A549 (cell line): ENCODE measurements at regions of chr9 and their contacts with region 1.

Region 1: GRCh38 chr9:137672907-137673791 is 54.3 kb downstream of the EHMT1 start:
- DNase-seq: peak; percentile 67 to 68
- ATAC-seq: peak; percentile 54 to 83; a peak in 4 of 6 replicates
- H3K4me3 ChIP-seq: no peak overlapping the region
- H3K27ac ChIP-seq: peak overlapping the region in 1 of 2 experiments; percentile 6; a peak in 1 of 6 replicates
- H3K4me1 ChIP-seq: peaks cover 17% of the 10 kb centered on the region; the same call in 2 of the 3 replicates
- CTCF ChIP-seq: peak; percentile 93
- EP300 ChIP-seq: no peak
- POLR2A ChIP-seq: no peak
- RAD21 ChIP-seq: peak; percentile 88 to 90

Region 2: DNA sequence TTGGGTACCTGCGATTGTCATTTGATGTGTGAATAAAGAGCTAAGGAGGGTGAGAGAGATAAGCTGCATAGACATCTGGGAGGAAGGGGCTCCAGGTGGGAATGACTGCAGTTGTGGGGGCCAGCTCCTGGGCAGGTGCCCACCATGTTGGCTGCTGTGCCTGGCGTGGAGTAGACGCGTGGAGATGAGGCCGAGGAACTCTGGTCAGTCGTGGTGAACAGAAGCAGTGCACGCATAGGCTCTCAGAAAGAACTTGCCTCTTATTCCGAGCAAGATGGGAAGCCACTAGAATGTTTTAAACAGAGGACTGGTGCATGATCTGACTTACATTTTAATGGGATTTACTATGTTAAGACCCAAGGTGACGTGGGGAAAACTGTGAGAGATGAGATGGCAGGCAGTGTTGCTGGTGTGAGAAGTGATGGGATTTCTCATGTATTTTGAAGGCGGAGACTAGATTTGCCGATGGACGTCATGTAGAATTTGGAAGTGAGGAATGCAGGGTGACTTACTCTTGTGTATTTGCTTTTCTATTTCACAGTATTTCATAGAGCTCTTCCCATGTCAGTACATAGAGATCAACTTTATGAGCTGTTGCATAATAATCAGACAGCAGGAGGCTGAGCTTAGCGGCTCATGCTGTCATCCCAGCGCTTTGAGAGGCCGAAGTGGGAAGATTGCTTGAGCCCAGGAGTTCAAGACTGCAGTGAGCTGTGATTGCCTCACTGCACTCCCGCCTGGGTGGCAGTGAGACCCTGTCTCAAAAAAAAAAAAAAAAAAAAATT is 16.8 kb after region 1 on chr9:
- CTCF ChIA-PET with region 1: interaction called, 49 read pairs
- POLR2A ChIA-PET with region 1: no interaction called
- DNase-seq: peak; percentile 36 to 72
- ATAC-seq: peak; percentile 88 to 94
- H3K4me3 ChIP-seq: no peak overlapping the region
- H3K27ac ChIP-seq: peak overlapping the region; percentile 71 to 75; a peak in 5 of 6 replicates
- H3K4me1 ChIP-seq: peaks cover 28% of the 10 kb centered on the region
- CTCF ChIP-seq: no peak
- EP300 ChIP-seq: peak in 1 of 2 experiments; percentile 40; a peak in 1 of 5 replicates
- POLR2A ChIP-seq: no peak
- RAD21 ChIP-seq: no peak

Region 3: GRCh38 chr9:137694967-137695879 is 22.1 kb after region 1 on chr9:
- CTCF ChIA-PET with region 1: interaction called, 39 read pairs
- POLR2A ChIA-PET with region 1: no interaction called
- DNase-seq: peak; percentile 54 to 61
- ATAC-seq: peak; percentile 92 to 97
- H3K4me3 ChIP-seq: no peak overlapping the region
- H3K27ac ChIP-seq: peak overlapping the region in 1 of 2 experiments; percentile 32; a peak in 2 of 6 replicates
- H3K4me1 ChIP-seq: peaks cover 15% of the 10 kb centered on the region
- CTCF ChIP-seq: peak; percentile 56
- EP300 ChIP-seq: no peak
- POLR2A ChIP-seq: no peak
- RAD21 ChIP-seq: peak; percentile 36 to 55; a peak in 4 of 5 replicates

Region 4: GRCh38 chr9:137705443-137706293 is 32.5 kb after region 1 on chr9:
- CTCF ChIA-PET with region 1: interaction called, 15 read pairs
- POLR2A ChIA-PET with region 1: no interaction called
- DNase-seq: no peak
- ATAC-seq: peak; percentile 34 to 46; a peak in 3 of 6 replicates
- H3K4me3 ChIP-seq: no peak overlapping the region
- H3K27ac ChIP-seq: peak overlapping the region in 1 of 2 experiments; percentile 39; a peak in 1 of 6 replicates
- H3K4me1 ChIP-seq: no peaks in the 10 kb centered on the region
- CTCF ChIP-seq: no peak
- EP300 ChIP-seq: no peak
- POLR2A ChIP-seq: no peak
- RAD21 ChIP-seq: no peak

Region 5: DNA sequence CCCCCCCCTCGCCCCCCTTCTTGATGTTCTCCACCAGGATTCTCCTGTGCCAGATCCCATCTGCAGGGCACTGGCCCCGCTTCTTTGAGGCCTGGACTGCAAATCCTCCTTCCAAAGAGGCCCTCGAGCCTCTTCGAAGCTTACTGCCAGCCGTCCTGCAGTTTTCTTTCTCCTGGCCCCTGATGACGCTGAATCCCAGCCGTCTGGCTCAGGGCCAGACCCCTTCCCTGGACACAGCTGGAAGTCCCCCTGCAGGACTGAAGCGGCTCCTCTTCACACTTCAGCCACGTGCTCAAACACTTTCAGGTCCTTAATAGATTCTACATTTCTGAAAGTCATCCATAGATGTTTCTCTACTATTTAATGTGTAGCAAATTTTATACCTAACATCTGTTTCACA is 67.2 kb after region 1 on chr9:
- CTCF ChIA-PET with region 1: interaction called, 18 read pairs
- POLR2A ChIA-PET with region 1: no interaction called
- DNase-seq: no peak
- ATAC-seq: no peak
- H3K4me3 ChIP-seq: no peak overlapping the region
- H3K27ac ChIP-seq: no peak overlapping the region
- H3K4me1 ChIP-seq: peaks cover 6% of the 10 kb centered on the region
- CTCF ChIP-seq: no peak
- EP300 ChIP-seq: no peak
- POLR2A ChIP-seq: no peak
- RAD21 ChIP-seq: no peak

Region 6: GRCh38 chr9:137774775-137775386 is 101.7 kb after region 1 on chr9:
- CTCF ChIA-PET with region 1: interaction called, 12 read pairs
- POLR2A ChIA-PET with region 1: no interaction called
- DNase-seq: no peak
- ATAC-seq: no peak
- H3K4me3 ChIP-seq: no peak overlapping the region
- H3K27ac ChIP-seq: no peak overlapping the region
- H3K4me1 ChIP-seq: no peaks in the 10 kb centered on the region
- CTCF ChIP-seq: no peak
- EP300 ChIP-seq: no peak
- POLR2A ChIP-seq: no peak
- RAD21 ChIP-seq: no peak